HEK293T (cell line): ENCODE measurements at regions of chrX and their contacts with region 1.

Region 1: DNA sequence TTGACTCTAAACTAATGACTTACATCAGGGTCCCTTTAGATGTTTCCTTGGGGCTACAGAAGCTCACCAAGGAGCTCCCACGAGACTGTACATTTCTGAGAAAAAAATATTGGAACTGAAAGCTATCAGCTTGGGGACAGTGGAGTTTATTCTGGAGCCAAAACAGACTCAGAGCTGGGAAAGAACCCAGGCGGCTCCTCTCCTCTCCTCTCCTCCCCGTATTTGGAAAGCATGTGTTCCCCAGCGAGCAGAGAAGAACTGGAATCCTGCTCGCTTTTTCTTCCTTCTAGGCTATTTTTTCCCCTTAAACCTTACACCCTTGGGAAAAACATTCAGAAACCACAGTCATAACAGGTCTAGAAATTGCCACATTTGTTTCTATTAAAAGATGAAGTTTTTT is 4.3 kb upstream of the MAP7D3 start:
- DNase-seq: no peak

Region 2: DNA sequence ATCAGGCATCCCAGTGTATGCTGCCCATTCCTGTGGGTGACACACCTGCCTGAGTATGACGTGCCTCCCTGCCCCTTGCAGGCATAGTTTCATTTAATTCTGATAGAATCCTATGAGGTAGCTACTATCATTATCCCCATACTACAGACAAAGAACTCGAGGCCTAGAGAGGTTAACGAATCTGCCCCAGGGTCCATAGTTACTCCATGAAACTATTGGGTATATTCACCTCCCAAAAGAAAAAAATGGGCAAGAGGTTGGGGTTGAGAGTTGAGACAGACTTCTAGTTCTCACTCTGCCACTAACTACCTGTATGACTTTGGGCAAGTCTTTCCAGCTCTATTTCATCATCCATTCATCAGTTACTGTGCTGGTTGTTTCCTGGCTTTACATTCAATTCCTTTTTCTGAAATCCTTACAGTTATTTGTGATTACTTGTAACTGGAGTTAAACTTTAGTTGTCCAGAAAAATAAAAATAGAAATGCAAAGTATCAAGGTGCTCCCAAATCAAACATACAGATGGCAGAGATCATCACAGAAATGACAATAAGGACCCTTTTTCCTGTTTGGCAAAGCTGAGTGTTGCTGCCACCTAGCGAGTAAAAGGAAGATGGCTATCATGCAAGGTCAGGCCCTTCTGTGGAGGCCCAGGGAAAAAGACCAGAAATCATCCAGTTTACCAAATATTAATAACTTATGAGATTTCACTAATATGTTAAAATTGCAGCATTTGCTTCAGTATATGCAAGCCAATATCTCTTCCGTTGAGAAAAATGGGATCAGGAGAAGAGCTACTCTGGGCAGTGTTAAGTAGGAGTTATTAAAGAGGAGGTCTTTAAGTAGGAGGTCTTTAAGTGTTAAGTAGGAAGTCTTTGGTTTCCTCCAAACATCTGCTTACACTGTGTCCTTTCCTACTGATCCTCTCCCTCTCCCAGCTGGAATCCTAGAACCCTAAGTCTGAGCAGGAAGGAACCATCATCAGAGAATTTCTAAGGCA is 12.8 kb after region 1 on chrX:
- CTCF ChIA-PET with region 1: interaction called, 14 read pairs
- POLR2A ChIA-PET with region 1: no interaction called
- DNase-seq: peak; percentile 63

Region 3: GRCh38 chrX:136652822-136653723 is 397.5 kb after region 1 on chrX:
- CTCF ChIA-PET with region 1: no interaction called
- POLR2A ChIA-PET with region 1: no interaction called
- DNase-seq: no peak